ENCODE measurements at regions of chr9 and their contacts with region 1.

Region 1: DNA sequence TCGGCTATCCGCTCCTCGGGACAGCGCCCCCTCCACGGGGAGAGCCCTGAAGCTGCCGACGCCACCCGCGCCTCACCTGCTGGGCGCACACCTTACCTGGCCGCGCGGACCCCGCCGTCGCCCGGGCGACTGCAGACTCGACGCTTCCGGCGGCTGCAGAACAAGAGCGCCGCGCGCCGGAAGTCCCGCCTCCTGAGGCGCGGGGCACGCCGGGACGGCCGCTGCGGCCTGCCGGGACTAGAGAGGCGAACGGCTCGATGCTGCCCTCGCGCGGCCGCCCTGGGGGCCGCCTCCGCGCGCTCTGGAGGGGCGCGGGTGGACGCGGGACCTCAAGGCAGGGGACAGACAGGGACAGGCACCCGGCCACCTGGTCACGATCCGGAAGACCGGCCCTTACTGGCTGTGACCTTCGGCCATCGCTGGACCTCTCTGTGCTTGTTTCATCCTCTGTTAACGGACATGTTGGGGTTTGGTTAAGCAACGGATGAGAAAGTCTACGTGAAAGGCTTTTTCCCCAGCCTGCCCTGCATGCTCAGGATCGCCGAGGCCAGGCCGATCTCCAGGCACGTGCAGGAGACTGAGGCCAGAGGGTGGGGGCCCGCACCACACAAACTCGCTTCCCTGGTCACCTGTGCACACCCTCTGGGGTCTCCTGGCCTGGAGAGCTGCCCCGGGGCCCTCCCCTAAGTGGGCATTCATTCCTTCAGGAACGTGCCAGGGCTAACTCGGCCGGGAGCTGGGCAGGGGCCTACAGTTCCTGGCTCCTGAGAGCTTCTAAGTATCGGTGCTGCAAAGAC is at the start of gene SNAPC4:
- DNase-seq: peak; percentile 91
- H3K4me3 ChIP-seq: peak within 1 kb of the TSS; percentile 70 to 99 (median 94)
- H3K27ac ChIP-seq: peak within 1 kb of the TSS; percentile 44 to 76 (median 65)
- H3K4me1 ChIP-seq: peaks cover 0 to 29% (median 21%) of the 10 kb centered on the region in 4 donors
- H3K27me3 ChIP-seq: no peaks in the 10 kb centered on the region
- CTCF ChIP-seq: peak; percentile 49 to 95 (median 62)
- EP300 ChIP-seq: no peak
- POLR2A ChIP-seq: peak; percentile 12 to 32
- total RNA-seq, gene SNAPC4: 2.6 to 10.8 (median 5.1) TPM

Region 2: GRCh38 chr9:136339173-136339957 is 60.9 kb before region 1 on chr9:
- intact Hi-C with region 1: loop called (anchors 1 kb)
- DNase-seq: no peak
- H3K4me3 ChIP-seq: no peak overlapping the region
- H3K27ac ChIP-seq: no peak overlapping the region
- H3K4me1 ChIP-seq: peaks cover 0 to 23% (median 21%) of the 10 kb centered on the region in 4 donors
- H3K27me3 ChIP-seq: no peaks in the 10 kb centered on the region
- CTCF ChIP-seq: peak; percentile 78 to 92 (median 88)
- EP300 ChIP-seq: no peak
- POLR2A ChIP-seq: no peak

Region 3: GRCh38 chr9:136665111-136665703 is 265.0 kb after region 1 on chr9:
- intact Hi-C with region 1: no loop called
- DNase-seq: no peak
- H3K4me3 ChIP-seq: peak overlapping the region; percentile 10 to 50 (median 36)
- H3K27ac ChIP-seq: peak overlapping the region; percentile 14 to 60 (median 36)
- H3K4me1 ChIP-seq: peaks cover 0 to 18% (median 12%) of the 10 kb centered on the region in 4 donors
- H3K27me3 ChIP-seq: peaks cover 12 to 61% (median 39%) of the 10 kb centered on the region in 3 donors
- CTCF ChIP-seq: peak in 2 of 4 experiments; percentile 21 to 24
- EP300 ChIP-seq: no peak
- POLR2A ChIP-seq: no peak